Activated CD4-positive, alpha-beta memory T cell treated with anti-CD3 and anti-CD28 coated beads, Interleukin-2, amount 10 ng/mL, durations not matched to agents 7 days and 5 days (primary cell): ENCODE measurements at regions of chr12 and their contacts with region 1.

Region 1: GRCh38 chr12:57621497-57622292 is 10.5 kb downstream of the ARHGEF25 start:
- DNase-seq: peak; percentile 62
- H3K4me3 Mint-ChIP-seq: peak overlapping the region; percentile 50
- H3K27ac Mint-ChIP-seq: no peak overlapping the region
- H3K4me1 Mint-ChIP-seq: peaks cover 24% of the 10 kb centered on the region
- H3K27me3 Mint-ChIP-seq: peaks cover 99% of the 10 kb centered on the region

Region 2: GRCh38 chr12:57368349-57369095 is 253.2 kb before region 1 on chr12:
- CTCF ChIA-PET with region 1: no interaction called
- POLR2A ChIA-PET with region 1: no interaction called
- DNase-seq: no peak
- H3K4me3 Mint-ChIP-seq: no peak overlapping the region
- H3K27ac Mint-ChIP-seq: no peak overlapping the region
- H3K4me1 Mint-ChIP-seq: no peaks in the 10 kb centered on the region
- H3K27me3 Mint-ChIP-seq: no peaks in the 10 kb centered on the region

Region 3: GRCh38 chr12:57476162-57476992 is 145.3 kb before region 1 on chr12:
- CTCF ChIA-PET with region 1: no interaction called
- POLR2A ChIA-PET with region 1: no interaction called
- DNase-seq: peak; percentile 86
- H3K4me3 Mint-ChIP-seq: peak overlapping the region; percentile 89
- H3K27ac Mint-ChIP-seq: peak overlapping the region; percentile 100
- H3K4me1 Mint-ChIP-seq: peaks cover 57% of the 10 kb centered on the region
- H3K27me3 Mint-ChIP-seq: no peaks in the 10 kb centered on the region

Region 4: DNA sequence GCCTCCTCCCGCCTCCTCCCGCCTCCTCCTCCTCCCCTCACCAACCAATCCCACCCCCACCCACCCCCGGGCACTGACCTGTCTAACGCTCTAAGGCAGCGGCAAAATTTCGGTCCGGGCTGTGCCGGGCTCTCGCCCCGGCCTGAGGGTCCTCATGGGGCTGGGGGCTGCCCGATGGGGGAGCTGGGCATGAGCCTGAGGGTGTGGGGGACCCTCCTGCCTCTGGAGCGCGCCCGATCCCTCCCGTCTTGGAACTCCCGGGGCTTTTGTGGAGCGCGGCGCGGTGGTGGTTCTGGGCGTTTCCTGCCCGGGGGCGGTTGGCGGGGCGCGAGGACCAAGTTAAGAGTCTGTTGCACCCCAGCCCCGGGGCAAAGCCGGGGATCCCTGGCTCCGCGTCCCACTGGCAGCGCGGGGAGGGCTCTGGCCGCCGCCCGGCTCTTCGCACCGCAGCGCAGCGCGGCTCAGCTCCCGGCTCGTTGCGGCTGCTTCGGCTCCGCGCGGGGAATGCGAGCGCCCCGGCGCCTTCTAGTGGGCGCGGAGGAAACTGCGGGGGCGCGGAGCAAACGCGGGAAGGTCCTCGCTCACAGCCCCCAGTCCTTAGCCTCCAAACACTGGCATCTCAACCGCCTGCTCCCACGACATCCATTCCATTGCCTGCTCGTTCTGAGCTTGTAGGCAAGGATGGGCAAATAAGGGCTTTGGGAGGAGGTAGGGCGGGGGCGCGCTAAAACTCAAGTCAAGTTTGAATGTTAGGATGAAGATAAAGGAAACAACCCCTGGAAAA is 11.2 kb after region 1 on chr12 and contains the start of gene B4GALNT1:
- CTCF ChIA-PET with region 1: interaction called, 14 read pairs
- POLR2A ChIA-PET with region 1: no interaction called
- DNase-seq: peak; percentile 71
- H3K4me3 Mint-ChIP-seq: peak within 1 kb of the TSS; percentile 63
- H3K27ac Mint-ChIP-seq: no peak within 1 kb of the TSS
- H3K4me1 Mint-ChIP-seq: peaks cover 14% of the 10 kb centered on the region
- H3K27me3 Mint-ChIP-seq: peaks cover 57% of the 10 kb centered on the region
- total RNA-seq, gene B4GALNT1: 1.4 to 1.8 TPM